ENCODE measurements at regions of chr2 and their contacts with region 1.

Region 1: GRCh38 chr2:46062637-46063412 is 234.4 kb upstream of the EPAS1 start:
- H3K4me3 ChIP-seq: no peak overlapping the region
- H3K27ac ChIP-seq: no peak overlapping the region
- H3K4me1 ChIP-seq: no peaks in the 10 kb centered on the region
- CTCF ChIP-seq: peak; percentile 72

Region 2: DNA sequence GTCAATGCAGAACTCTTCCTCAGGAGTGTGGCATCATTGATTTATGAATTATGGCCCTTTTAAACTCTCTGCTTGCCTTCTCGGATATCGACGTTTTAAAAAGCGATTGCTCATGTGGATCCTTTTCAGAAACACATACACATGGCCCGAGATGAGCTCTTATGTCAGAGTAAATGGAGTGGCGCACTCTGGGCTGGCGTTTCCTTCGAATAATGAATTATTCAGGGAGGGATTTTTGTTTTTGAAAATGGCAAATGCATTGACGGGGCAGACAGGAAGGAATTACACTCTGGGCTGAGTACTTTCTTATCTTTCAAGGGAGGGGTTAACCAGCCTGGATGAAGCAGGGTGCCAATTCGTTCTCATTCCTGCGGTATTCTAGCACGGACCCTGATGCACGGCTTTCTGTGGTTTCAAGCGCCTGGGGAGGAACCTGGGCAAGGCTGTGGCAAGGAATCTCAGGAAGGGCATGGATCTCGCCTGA is 268.6 kb before region 1 on chr2:
- CTCF ChIA-PET with region 1: no interaction called
- POLR2A ChIA-PET with region 1: no interaction called
- H3K4me3 ChIP-seq: no peak overlapping the region
- H3K27ac ChIP-seq: no peak overlapping the region
- H3K4me1 ChIP-seq: no peaks in the 10 kb centered on the region; the same call in 1 of the 2 replicates
- CTCF ChIP-seq: no peak

Region 3: GRCh38 chr2:46050489-46050888 is 12.3 kb before region 1 on chr2:
- CTCF ChIA-PET with region 1: interaction called, 15 read pairs
- POLR2A ChIA-PET with region 1: no interaction called
- H3K4me3 ChIP-seq: no peak overlapping the region
- H3K27ac ChIP-seq: no peak overlapping the region
- H3K4me1 ChIP-seq: no peaks in the 10 kb centered on the region
- CTCF ChIP-seq: no peak

Region 4: GRCh38 chr2:46297546-46298271 is 234.9 kb after region 1 on chr2:
- CTCF ChIA-PET with region 1: interaction called, 13 read pairs
- POLR2A ChIA-PET with region 1: interaction called, 3 read pairs
- H3K4me3 ChIP-seq: peak overlapping the region; percentile 65
- H3K27ac ChIP-seq: peak overlapping the region; percentile 58
- H3K4me1 ChIP-seq: no peaks in the 10 kb centered on the region
- CTCF ChIP-seq: peak; percentile 60

Region 5: DNA sequence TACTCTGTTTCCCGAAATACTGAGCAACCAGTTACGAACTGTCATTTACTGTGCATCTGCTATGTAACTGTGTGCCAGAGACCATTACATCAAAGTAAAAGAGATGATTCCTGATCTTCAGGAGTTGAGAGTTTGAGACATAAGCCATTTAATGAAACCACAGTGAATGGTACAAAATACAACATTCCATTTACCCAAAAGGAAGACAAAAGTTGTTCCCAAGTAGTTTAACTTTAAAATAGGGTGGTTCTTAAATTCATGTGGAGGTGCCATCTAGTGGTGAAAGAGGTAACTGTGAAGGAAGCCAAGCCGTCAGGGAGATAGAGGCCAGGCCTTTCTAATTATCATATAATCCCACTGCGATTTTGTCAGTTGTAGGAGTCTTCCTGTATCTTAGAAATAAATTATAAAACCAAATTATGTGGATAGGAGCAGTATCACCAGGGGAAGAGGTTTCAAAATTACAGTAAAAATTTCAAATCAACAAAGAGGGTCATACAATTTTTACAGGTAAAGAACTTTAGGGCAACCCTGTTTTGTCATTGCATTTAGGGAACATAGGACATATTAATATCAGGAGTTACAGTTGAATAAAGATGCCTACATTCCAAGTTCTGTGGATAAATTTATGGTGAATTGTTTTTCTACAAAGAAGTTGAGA is 302.1 kb after region 1 on chr2:
- CTCF ChIA-PET with region 1: interaction called, 19 read pairs
- POLR2A ChIA-PET with region 1: no interaction called
- H3K4me3 ChIP-seq: no peak overlapping the region
- H3K27ac ChIP-seq: no peak overlapping the region
- H3K4me1 ChIP-seq: no peaks in the 10 kb centered on the region
- CTCF ChIP-seq: peak; percentile 15; the same call in 1 of the 2 replicates

Region 6: GRCh38 chr2:46461011-46461674 is 398.3 kb after region 1 on chr2:
- CTCF ChIA-PET with region 1: interaction called, 25 read pairs
- POLR2A ChIA-PET with region 1: no interaction called
- H3K4me3 ChIP-seq: no peak overlapping the region
- H3K27ac ChIP-seq: no peak overlapping the region
- H3K4me1 ChIP-seq: no peaks in the 10 kb centered on the region
- CTCF ChIP-seq: peak; percentile 87

Measured in HEK293 (cell line).